Activated T-helper 2 cell treated with anti-CD3 and anti-CD28 coated beads, Interferon-gamma antibody, Interleukin-2, Interleukin-4, amounts not matched to agents 10 μg/mL and 5 μg/mL and 100 μg/mL, durations not matched to agents 14 hours and 24 hours and 36 hours (primary cell): ENCODE measurements at regions of chr3 and their contacts with region 1.

Region 1: DNA sequence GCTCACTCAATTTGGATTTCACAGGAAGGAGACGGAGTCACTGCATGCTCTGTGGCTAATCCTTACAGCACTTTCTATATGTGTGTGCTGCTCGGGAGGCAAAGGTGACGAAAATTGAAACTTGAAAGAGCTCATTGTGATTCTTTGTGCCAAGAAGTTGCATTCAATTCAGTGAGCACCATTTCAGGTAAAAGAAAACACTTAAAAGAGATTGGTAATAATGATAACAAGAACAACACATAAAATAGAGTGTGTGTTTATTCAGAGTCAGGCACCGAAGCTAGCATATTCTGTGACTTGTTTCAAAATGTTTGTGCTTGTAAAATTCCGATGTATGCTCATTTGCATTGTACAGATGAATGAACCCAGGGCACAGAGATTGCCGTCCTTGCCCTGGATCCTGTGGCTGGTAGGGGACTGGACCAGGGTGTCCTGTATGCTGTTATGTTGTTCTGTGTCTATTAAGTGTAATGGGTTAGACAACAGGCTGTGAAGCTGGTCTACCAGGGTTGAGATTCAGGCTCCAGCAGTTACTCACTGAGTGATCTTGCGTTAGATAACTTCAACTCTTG is 193.3 kb upstream of the PROK2 start:
- DNase-seq: peak; percentile 28
- H3K4me3 Mint-ChIP-seq: peak overlapping the region; percentile 37
- H3K27ac Mint-ChIP-seq: peak overlapping the region; percentile 84
- H3K4me1 Mint-ChIP-seq: peaks cover 46% of the 10 kb centered on the region
- H3K27me3 Mint-ChIP-seq: no peaks in the 10 kb centered on the region

Region 2: DNA sequence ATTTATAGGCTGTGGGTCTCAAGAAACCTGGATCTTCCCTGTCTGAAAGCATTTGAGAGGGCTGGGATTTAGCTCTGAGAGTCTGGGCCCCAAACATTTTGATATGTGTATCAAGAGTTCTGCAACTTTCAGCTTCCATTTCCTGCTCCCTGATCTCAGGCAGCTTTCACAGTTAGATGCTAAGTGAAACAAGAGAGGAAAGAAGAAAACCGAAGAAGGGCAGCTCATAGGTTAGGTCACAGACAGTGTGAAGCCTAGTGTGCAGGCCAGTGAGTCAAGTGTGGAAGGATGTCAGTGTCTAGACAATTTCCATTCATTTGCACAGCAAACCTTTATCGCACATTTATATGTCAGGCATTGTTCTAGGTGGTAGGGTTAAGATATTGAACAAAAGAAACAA is 19.7 kb before region 1 on chr3:
- intact Hi-C with region 1: loop called (anchors 1 kb)
- DNase-seq: no peak
- H3K4me3 Mint-ChIP-seq: no peak overlapping the region
- H3K27ac Mint-ChIP-seq: no peak overlapping the region
- H3K4me1 Mint-ChIP-seq: peaks cover 17% of the 10 kb centered on the region
- H3K27me3 Mint-ChIP-seq: peaks cover 10% of the 10 kb centered on the region

Region 3: DNA sequence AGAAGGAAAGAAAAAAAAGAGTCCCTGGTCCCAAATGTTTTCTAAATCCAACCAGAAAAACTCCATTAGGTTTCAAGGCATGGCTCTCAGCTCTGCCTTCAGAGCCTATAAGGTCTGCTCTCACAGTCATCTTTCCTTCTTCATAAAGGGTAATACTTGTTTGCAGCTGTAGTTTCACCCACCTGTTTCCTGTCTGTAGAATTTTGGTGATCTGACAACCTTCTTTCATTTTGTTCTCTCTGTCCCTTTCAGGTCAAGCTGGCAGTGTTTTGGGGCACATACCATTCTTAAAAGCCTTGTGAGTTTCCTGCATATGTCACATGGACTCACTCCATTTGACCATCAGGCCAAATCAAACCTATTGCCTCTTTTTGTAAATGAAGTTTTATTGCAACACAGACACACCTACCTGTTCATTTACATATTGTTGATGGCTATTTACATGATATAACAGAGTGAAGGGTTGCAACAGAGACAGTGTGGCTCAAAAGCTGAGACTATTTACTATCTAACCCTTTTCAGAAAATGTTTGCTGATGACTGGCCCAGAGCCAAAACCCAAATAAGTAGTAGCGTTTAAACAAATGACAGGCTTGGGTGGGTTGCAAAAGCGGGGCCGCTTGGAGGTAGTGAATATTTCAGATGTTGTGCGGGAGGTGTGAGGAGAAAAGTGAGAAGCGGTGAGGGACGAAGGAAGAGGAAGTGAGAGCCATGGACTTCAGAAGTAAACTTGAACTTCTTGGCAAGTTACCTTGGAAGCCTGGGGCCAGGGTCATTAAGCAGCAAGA is 99.4 kb after region 1 on chr3:
- intact Hi-C with region 1: loop called (anchors 5 kb)
- DNase-seq: no peak
- H3K4me3 Mint-ChIP-seq: no peak overlapping the region
- H3K27ac Mint-ChIP-seq: no peak overlapping the region
- H3K4me1 Mint-ChIP-seq: peaks cover 31% of the 10 kb centered on the region
- H3K27me3 Mint-ChIP-seq: no peaks in the 10 kb centered on the region

Region 4: DNA sequence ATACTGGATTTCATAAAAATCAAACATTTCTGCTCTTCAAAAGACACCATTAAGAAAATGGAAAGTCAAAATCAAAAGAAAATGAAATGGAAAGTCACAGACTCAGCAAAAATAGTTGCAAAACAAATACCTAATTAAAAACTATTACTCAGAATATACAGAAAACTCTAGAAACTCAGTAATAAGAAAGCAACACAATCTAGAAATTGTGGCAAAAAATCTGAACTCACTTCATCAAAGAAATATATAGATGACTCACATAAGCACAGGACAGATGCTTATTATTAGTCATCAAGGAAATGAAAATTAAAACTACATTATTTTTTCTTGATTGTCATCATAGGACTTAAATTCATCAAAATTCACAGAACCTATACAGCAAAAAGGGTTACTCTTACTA is 440.0 kb after region 1 on chr3:
- intact Hi-C with region 1: loop called (anchors 2 kb)
- DNase-seq: no peak
- H3K4me3 Mint-ChIP-seq: no peak overlapping the region
- H3K27ac Mint-ChIP-seq: peak overlapping the region; percentile 40
- H3K4me1 Mint-ChIP-seq: peaks cover 63% of the 10 kb centered on the region
- H3K27me3 Mint-ChIP-seq: no peaks in the 10 kb centered on the region